Testis (tissue), 5 donors: ENCODE measurements at regions of chr17 and their contacts with region 1.

Region 1: DNA sequence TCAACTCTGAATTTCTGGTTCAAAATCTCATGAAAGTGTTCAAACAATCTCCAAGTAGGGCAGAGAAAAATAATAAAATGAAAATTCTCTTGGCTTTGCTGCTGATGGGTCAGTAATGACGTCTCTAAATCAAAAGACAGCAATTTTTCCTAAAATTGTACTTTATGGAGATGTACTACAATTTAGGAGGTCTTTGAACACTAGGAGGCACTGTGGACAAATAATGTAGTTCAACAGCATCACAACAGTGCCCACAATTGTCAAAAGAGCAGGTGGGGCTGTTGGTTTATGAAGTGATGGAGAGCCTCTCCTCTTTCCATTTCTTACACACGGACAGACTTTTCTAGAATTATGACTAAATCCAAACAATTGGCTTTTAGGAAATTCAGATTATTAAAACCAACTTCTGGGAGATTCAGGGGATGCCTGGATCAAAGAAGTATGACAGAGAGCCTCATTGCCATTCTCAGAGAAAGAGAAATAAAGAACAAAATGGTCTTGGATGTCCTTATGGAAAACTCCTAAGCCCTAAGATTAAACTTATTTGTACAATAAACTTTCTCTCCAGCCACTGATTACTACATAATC is 23.8 kb downstream of the EZH1 start:
- DNase-seq: no peak
- H3K4me3 ChIP-seq: no peak overlapping the region
- H3K27ac ChIP-seq: no peak overlapping the region
- H3K4me1 ChIP-seq: no peaks in the 10 kb centered on the region
- H3K27me3 ChIP-seq: no peaks in the 10 kb centered on the region
- CTCF ChIP-seq: peak; percentile 48 to 77 (median 72)
- POLR2A ChIP-seq: no peak

Region 2: DNA sequence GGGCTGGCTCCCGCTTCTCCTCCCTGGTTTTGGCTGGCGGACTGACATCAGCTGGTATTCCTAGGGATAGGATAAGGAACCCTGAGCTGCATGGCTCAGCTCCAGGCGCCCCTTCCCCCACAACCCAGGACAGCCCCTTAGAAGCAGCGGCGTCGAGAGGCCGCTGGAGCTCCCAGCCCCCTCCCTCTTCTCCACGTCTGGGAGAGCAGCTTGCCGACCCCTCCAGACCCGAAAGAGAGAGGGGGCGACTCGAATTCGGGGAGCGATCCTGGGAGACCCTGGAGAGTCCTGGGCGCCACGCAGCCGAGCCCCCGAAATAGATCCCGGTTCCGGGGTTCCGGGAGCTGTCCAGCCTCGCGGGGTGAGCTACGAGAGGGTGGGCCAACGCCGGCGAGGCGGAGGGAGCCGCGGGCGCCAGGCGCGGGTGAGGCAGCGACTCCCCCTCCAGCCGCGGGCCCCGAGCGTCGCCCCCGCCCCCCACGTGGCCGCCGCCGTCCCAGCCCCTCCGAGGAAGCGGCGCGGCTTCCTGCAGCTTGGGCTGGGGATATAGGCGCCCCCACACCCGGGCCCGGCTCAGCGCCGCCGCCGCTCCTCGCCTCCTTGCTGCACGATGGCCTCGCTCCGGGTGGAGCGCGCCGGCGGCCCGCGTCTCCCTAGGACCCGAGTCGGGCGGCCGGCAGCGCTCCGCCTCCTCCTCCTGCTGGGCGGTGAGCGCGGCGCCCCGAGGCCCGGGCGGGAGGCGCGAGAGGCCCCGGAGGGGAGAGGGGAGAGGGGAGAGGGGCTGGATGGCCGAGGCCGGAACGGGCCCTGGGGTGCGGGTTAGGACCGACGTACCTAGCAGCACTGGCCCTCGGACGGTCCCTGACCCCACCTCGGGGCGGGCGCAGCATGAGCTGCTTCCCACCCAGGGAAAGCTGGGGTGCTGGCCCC is 39.8 kb after region 1 on chr17 and contains the start of gene RAMP2:
- intact Hi-C with region 1: loop called (anchors 5 kb)
- DNase-seq: no peak
- H3K4me3 ChIP-seq: peak within 1 kb of the TSS; percentile 56 to 61
- H3K27ac ChIP-seq: peak within 1 kb of the TSS; percentile 68 to 69
- H3K4me1 ChIP-seq: peaks cover 7% of the 10 kb centered on the region
- H3K27me3 ChIP-seq: no peaks in the 10 kb centered on the region
- CTCF ChIP-seq: no peak
- POLR2A ChIP-seq: no peak
- total RNA-seq, gene RAMP2: 6.9 to 14.6 TPM

Region 3: DNA sequence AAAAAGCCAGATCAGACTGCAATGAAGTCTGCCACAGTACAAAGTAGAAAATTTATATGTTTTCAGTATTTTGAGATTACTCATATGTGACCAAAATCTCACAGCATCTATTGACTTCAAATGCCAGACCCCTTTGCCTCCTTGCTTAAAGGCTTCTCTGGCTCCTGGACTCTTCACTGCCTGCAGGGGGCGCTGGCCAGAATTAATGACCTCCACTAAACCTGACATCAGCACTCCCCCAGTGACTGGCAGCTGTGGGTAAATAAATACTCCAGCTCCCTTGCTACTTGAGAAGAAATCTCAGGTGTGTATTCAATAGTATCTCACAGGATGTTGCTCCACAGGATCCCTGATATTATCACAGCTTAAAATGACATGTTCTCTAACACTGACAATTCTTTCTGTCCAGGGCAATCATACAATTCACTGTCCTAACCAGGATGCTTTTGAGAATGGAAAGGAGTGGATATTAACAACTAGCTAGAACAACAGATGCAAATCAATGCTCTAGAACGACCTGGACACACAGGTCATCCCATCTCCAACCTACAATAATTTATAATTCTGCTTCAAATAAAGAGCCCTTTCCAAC is 99.0 kb after region 1 on chr17:
- intact Hi-C with region 1: loop called (anchors 10 kb)
- DNase-seq: peak; percentile 68
- H3K4me3 ChIP-seq: no peak overlapping the region
- H3K27ac ChIP-seq: no peak overlapping the region
- H3K4me1 ChIP-seq: peaks cover 7% of the 10 kb centered on the region
- H3K27me3 ChIP-seq: no peaks in the 10 kb centered on the region
- CTCF ChIP-seq: peak in 2 of 3 experiments; percentile 43 to 60
- POLR2A ChIP-seq: no peak